Dorsolateral prefrontal cortex (tissue), 120 donors: ENCODE measurements at regions of chr17 and their contacts with region 1.

Region 1: GRCh38 chr17:29293890-29294579 is at the start of gene NUFIP2:
- DNase-seq: peak; percentile 98 to 100 (median 100)
- H3K4me3 ChIP-seq: peak within 1 kb of the TSS; percentile 57 to 99 (median 91)
- H3K27ac ChIP-seq: peak within 1 kb of the TSS; percentile 91 to 100 (median 99)
- H3K27me3 ChIP-seq: no peaks in the 10 kb centered on the region
- CTCF ChIP-seq: peak in 47 of 56 donors; percentile 24 to 65 (median 47)
- total RNA-seq, gene NUFIP2: 42.4 to 96.8 (median 54.8) TPM

Region 2: DNA sequence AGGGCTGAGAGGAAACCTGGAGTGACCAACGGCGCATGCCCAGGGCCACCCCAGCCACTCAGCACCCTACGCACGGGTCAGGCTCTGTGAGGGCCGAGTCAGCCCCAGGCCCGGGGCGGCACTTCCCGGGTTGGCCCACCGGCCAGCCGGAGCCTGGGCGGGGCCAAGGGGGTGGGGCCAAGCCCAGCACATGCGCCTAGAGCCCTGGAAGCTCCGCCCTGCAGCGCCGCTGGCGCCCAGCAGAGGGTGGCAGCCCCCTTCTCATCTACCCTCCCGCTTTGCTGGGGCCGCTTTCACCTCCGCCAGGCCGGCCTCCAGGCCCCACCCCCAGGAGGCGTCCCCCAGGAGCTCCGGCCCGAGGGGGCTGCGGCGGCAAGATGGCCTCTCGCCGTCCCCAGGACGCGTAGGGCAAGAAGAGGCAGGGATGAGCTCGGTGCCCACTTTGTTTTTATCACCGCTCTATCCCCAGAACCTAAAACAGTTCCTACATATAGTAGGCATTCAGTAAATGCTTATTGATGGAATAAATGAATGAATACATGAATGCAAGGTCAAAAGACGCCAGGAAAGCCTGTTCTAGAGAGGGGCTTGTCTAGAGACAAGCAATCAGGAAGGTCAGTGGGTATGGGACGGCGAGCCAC is 145.1 kb before region 1 on chr17:
- intact Hi-C with region 1: loop called (anchors 2 kb)
- DNase-seq: peak; percentile 86 to 93 (median 90)
- H3K4me3 ChIP-seq: peak overlapping the region; percentile 37 to 84 (median 60)
- H3K27ac ChIP-seq: peak overlapping the region; percentile 20 to 97 (median 93)
- H3K27me3 ChIP-seq: no peaks in the 10 kb centered on the region
- CTCF ChIP-seq: peak; percentile 88 to 100 (median 98)

Region 3: GRCh38 chr17:29212681-29213121 is 81.3 kb before region 1 on chr17:
- intact Hi-C with region 1: loop called (anchors 2 to 5 kb)
- DNase-seq: peak in 9 of 10 donors; percentile 42 to 91 (median 74)
- H3K4me3 ChIP-seq: peak overlapping the region in 35 of 59 donors; percentile 14 to 65 (median 30)
- H3K27ac ChIP-seq: peak overlapping the region; percentile 35 to 99 (median 94)
- H3K27me3 ChIP-seq: no peaks in the 10 kb centered on the region
- CTCF ChIP-seq: peak in 12 of 56 donors; percentile 3 to 41 (median 20)

Region 4: DNA sequence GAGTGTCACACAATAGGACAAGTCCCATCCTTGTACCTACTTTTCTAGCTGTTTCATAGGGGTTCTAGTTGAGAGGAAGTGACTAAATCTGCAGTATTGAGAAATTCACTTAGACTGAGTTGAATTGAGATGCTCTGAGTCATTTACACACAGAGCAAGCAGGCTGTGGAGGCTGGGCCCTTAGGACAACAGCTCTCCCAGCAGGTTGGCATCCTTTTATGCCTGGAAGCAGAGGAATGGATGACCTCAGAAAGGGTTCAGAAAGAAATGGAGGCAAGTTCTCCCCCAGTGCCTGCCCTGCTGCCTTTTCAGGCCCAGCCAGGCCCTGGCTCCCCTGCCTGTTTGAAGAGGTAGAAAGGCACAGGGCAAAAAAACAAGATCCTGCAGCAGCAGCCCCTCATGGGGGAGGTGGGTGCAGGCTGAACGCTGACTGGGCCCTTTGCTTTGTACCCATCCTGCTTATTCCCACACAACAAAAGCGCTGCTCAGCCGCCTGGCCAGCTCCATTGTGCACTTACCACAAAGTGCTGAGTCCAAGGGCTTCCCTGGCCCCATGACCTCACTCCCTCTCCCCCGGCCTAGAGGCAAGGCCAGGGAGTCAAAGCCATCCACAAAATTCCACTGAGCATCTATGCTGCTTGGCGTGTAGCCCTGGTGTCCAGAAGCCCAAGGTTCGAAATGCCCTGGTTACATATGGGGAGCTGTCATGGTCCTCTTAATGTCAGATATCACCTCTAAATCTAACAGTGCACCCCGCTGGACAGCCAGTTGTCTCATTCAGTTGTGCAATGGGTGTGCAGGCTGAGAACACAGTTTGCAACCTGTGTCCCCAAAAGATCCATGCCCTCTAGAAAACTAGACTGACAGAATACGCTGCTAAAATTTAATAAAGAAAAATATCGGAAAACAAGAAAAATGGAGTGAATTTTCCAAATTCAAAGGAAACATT is 52.7 kb before region 1 on chr17:
- intact Hi-C with region 1: loop called in 1 of 2 experiments (anchors 5 kb)
- DNase-seq: peak in 7 of 10 donors; percentile 44 to 64 (median 55)
- H3K4me3 ChIP-seq: no peak overlapping the region
- H3K27ac ChIP-seq: peak overlapping the region in 58 of 59 donors; percentile 30 to 93 (median 80)
- H3K27me3 ChIP-seq: no peaks in the 10 kb centered on the region
- CTCF ChIP-seq: peak in 7 of 56 donors; percentile 5 to 34 (median 27)

Region 5: DNA sequence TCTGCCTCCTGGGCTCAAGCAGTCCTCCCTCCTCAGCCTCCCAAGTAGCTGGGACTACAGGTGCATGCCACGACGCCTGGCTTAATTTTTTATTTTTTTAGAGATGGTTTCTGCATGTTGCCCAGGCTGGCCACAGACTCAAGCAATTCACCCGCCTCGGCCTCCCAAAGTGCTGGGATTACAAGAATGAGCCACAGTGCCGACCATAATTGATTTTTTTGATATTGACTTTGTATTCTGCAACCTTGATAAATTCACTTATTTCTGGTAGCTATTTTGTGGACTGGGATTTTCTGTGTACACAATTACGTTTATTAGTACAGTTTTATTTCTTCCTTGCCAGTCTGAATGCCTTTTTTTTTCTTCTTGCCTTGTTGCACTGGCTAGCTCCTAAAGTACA is 126.1 kb after region 1 on chr17:
- intact Hi-C with region 1: no loop called
- DNase-seq: no peak
- H3K4me3 ChIP-seq: no peak overlapping the region
- H3K27ac ChIP-seq: no peak overlapping the region
- H3K27me3 ChIP-seq: no peaks in the 10 kb centered on the region
- CTCF ChIP-seq: no peak

Region 6: DNA sequence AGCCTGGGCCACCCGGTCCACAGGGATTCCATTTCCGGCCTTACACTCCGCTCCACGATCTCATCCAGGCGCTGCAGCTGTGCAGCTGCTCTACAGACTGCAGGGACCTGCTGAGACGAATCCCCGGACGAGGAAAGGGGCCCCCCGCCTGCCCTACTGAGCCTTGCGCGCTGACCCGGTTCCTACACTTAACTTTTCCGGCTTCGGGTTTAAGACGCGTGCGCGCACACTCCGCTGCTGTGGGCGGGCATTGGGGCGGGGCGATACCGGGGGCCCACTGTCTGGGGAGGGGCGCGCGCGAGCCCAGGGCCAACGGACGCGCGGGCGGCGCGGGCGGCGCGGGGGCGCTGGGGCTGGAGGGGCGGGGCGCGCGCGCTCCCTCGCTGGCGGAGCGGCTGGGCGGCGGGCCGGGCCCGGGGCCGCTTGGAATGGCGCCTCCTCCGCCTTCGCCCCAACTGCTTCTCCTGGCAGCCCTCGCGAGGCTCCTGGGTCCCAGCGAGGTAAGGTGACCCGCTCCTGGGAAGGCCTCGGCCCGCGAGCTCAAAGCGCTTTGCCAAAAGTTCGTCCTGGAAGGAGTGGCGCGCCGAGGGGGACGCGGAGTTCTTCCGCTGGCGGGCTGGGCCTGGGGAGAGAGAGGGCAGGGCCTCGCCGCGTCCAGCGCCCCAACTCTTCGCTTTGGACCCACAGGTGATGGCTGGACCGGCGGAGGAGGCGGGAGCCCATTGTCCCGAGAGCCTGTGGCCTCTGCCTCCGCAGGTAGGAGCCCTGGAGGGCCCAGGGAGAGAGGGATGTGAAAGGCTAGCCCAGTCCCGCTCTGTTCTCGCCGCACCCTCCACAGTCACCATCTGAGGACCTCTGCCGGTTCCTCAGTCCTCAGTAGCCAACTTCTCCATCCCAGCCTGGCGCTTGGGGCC is 274.6 kb after region 1 on chr17 and contains the start of gene TP53I13:
- intact Hi-C with region 1: loop called in 1 of 2 experiments (anchors 5 kb)
- DNase-seq: peak in 8 of 10 donors; percentile 61 to 85 (median 78)
- H3K4me3 ChIP-seq: peak within 1 kb of the TSS; percentile 39 to 89 (median 74)
- H3K27ac ChIP-seq: peak within 1 kb of the TSS; percentile 63 to 94 (median 87)
- H3K27me3 ChIP-seq: peaks cover 0 to 13% (median 0%) of the 10 kb centered on the region in 45 donors
- CTCF ChIP-seq: peak in 1 of 56 donors; percentile 14
- total RNA-seq, gene TP53I13: 10.1 to 40.2 (median 20.1) TPM